Caco-2 (cell line): ENCODE measurements at regions of chr2 and their contacts with region 1.

Region 1: GRCh38 chr2:203814661-203815540 is 52.7 kb upstream of the CTLA4 start:
- DNase-seq: peak; percentile 72 to 77
- H3K4me3 ChIP-seq: no peak overlapping the region
- H3K4me3 Mint-ChIP-seq: peak overlapping the region; percentile 59
- H3K27ac Mint-ChIP-seq: peak overlapping the region; percentile 75
- H3K4me1 ChIP-seq: peaks cover 39% of the 10 kb centered on the region
- H3K4me1 Mint-ChIP-seq: peaks cover 27% of the 10 kb centered on the region
- H3K27me3 ChIP-seq: no peaks in the 10 kb centered on the region
- H3K27me3 Mint-ChIP-seq: no peaks in the 10 kb centered on the region
- CTCF ChIP-seq: peak; percentile 72 to 83

Region 2: GRCh38 chr2:203225423-203226039 is 589.4 kb before region 1 on chr2:
- CTCF ChIA-PET with region 1: interaction called, 6 read pairs
- POLR2A ChIA-PET with region 1: no interaction called
- intact Hi-C with region 1: loop called (anchors 1 kb)
- DNase-seq: peak; percentile 43 to 51
- H3K4me3 ChIP-seq: no peak overlapping the region
- H3K4me3 Mint-ChIP-seq: no peak overlapping the region
- H3K27ac Mint-ChIP-seq: no peak overlapping the region
- H3K4me1 ChIP-seq: no peaks in the 10 kb centered on the region
- H3K4me1 Mint-ChIP-seq: no peaks in the 10 kb centered on the region
- H3K27me3 ChIP-seq: no peaks in the 10 kb centered on the region
- H3K27me3 Mint-ChIP-seq: no peaks in the 10 kb centered on the region
- CTCF ChIP-seq: peak; percentile 76 to 78

Region 3: DNA sequence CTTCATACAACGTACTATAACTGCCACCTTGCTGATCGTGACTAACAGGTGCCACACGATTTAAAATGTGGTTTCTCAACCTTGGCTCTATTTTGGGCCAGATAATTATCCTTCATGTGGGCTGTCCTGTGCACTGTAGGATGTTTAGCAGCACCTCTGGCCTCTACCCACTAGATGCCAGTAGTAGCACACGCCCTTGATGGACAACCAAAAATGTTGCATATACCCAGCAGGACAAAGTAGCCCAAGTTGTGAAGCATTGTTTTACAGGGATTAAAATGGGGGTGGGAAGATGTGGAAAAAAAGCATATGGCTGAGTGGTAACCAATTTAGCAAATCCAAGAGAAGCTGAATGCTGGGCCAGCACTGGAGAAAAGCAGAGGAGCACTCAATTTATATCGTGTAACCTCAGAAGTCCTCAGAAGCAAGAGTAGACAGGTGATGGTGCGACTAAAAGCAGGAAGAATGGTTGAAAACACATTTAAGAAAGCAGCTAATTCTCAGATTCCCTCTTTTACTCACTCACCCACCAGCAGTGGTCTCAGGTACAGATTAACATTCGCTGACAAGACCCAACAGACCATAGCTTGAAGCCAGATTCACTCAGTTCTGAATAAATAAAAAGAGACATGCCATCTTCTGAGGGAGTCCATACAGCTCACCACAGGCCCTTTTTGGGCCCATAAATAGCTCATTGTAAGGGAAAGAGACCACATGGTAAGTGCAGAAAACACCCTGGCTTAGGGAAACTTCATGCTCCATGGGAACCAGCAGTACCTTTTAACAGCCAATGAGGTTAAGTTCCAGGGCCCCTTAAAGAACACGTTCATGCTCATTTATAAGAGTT is 330.4 kb before region 1 on chr2:
- CTCF ChIA-PET with region 1: interaction called, 10 read pairs
- POLR2A ChIA-PET with region 1: no interaction called
- intact Hi-C with region 1: loop called (anchors 1 kb)
- DNase-seq: peak; percentile 39 to 41
- H3K4me3 ChIP-seq: no peak overlapping the region
- H3K4me3 Mint-ChIP-seq: no peak overlapping the region
- H3K27ac Mint-ChIP-seq: no peak overlapping the region
- H3K4me1 ChIP-seq: no peaks in the 10 kb centered on the region
- H3K4me1 Mint-ChIP-seq: no peaks in the 10 kb centered on the region
- H3K27me3 ChIP-seq: no peaks in the 10 kb centered on the region
- H3K27me3 Mint-ChIP-seq: no peaks in the 10 kb centered on the region
- CTCF ChIP-seq: peak; percentile 41 to 75

Region 4: GRCh38 chr2:203650860-203651613 is 163.9 kb before region 1 on chr2:
- CTCF ChIA-PET with region 1: interaction called, 6 read pairs
- POLR2A ChIA-PET with region 1: no interaction called
- intact Hi-C with region 1: loop called (anchors 1 kb)
- DNase-seq: peak in 1 of 2 experiments; percentile 53
- H3K4me3 ChIP-seq: no peak overlapping the region
- H3K4me3 Mint-ChIP-seq: peak overlapping the region; percentile 24
- H3K27ac Mint-ChIP-seq: peak overlapping the region; percentile 89
- H3K4me1 ChIP-seq: peaks cover 51% of the 10 kb centered on the region
- H3K4me1 Mint-ChIP-seq: peaks cover 60% of the 10 kb centered on the region
- H3K27me3 ChIP-seq: no peaks in the 10 kb centered on the region
- H3K27me3 Mint-ChIP-seq: no peaks in the 10 kb centered on the region
- CTCF ChIP-seq: peak; percentile 24 to 37

Region 5: DNA sequence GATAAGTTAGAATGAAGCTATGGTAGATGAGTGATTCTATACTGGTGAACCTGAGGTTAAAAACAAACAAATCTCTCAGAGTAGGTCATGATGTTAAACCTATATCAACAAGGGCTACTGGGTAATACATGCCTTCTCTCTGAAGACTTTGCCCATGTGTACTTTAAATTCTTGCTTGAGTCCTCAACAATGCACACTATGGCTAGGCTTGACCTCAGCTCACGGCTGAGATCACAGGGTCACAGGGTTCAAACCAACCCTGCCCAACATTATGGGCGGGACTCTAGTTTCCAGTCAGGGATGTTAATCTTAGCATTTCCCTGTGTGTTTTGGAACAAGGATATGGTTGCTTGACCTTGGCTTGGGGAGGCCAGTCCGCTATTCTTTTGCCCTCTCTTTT is 100.8 kb before region 1 on chr2:
- CTCF ChIA-PET with region 1: no interaction called
- POLR2A ChIA-PET with region 1: no interaction called
- intact Hi-C with region 1: loop called (anchors 2 kb)
- DNase-seq: peak; percentile 74 to 82
- H3K4me3 ChIP-seq: no peak overlapping the region
- H3K4me3 Mint-ChIP-seq: no peak overlapping the region
- H3K27ac Mint-ChIP-seq: peak overlapping the region; percentile 37
- H3K4me1 ChIP-seq: peaks cover 37% of the 10 kb centered on the region
- H3K4me1 Mint-ChIP-seq: peaks cover 31% of the 10 kb centered on the region
- H3K27me3 ChIP-seq: no peaks in the 10 kb centered on the region
- H3K27me3 Mint-ChIP-seq: no peaks in the 10 kb centered on the region
- CTCF ChIP-seq: no peak

Region 6: DNA sequence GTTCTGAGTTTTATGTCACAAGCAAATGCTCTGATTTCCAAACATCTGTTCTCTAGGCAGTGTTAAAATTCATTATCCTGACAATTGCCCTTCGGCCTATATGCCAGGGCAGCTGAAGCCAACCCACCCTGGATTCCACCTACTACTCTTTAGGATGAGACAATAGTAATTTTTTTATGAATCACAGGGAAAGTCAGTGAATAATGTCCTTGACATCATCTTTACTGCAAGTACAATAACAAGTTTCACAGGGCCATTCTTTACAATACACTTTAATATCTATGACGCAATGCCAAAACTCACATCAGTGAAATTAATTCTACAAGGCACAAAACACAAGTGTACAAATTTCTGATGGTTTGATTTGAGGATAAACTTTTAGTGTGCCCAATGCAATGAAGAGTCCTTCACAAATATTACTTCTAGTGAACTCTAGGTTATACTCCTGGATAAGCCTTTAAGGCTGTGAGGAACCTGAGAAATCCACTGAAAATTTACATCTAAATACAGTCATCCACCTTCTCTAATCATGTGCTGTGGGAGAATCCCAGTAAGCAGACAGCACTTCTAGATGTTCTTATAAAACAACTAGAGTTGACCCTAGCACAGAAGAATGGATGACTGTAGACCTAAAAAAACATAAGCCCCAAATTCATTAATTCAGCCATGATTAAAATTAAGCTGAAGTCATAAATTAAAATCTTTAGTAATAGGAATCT is 24.6 kb before region 1 on chr2:
- CTCF ChIA-PET with region 1: interaction called, 5 read pairs
- POLR2A ChIA-PET with region 1: no interaction called
- intact Hi-C with region 1: loop called (anchors 2 kb)
- DNase-seq: no peak
- H3K4me3 ChIP-seq: no peak overlapping the region
- H3K4me3 Mint-ChIP-seq: no peak overlapping the region
- H3K27ac Mint-ChIP-seq: peak overlapping the region; percentile 76
- H3K4me1 ChIP-seq: peaks cover 70% of the 10 kb centered on the region
- H3K4me1 Mint-ChIP-seq: peaks cover 30% of the 10 kb centered on the region
- H3K27me3 ChIP-seq: no peaks in the 10 kb centered on the region
- H3K27me3 Mint-ChIP-seq: no peaks in the 10 kb centered on the region
- CTCF ChIP-seq: no peak